A673 (cell line): ENCODE measurements at regions of chr16 and their contacts with region 1.

Region 1: DNA sequence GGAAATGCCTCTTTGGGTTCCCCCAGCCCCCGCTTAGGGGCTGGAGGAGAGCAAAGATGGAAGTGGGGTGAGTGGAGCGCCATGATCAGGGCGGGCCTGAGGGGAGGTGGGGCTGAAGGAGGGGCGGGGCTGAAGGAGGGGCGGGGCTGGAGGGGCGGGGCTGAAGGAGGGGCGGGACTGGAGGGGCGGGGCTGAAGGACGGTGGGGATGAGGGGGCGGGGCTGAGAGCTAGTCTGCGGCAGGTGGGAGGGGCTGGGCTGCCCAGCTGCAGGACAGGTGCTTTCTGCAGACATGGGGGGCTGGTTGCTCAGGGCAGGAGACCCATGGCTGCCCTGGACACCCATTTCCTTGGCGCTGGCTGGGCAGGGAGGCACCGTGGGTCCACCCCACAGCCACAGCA is 39.1 kb upstream of the PABPN1L start:
- DNase-seq: peak; percentile 26
- H3K4me3 ChIP-seq: no peak overlapping the region
- H3K27ac ChIP-seq: no peak overlapping the region
- H3K4me1 ChIP-seq: peaks cover 4% of the 10 kb centered on the region
- H3K27me3 ChIP-seq: no peaks in the 10 kb centered on the region
- CTCF ChIP-seq: no peak

Region 2: DNA sequence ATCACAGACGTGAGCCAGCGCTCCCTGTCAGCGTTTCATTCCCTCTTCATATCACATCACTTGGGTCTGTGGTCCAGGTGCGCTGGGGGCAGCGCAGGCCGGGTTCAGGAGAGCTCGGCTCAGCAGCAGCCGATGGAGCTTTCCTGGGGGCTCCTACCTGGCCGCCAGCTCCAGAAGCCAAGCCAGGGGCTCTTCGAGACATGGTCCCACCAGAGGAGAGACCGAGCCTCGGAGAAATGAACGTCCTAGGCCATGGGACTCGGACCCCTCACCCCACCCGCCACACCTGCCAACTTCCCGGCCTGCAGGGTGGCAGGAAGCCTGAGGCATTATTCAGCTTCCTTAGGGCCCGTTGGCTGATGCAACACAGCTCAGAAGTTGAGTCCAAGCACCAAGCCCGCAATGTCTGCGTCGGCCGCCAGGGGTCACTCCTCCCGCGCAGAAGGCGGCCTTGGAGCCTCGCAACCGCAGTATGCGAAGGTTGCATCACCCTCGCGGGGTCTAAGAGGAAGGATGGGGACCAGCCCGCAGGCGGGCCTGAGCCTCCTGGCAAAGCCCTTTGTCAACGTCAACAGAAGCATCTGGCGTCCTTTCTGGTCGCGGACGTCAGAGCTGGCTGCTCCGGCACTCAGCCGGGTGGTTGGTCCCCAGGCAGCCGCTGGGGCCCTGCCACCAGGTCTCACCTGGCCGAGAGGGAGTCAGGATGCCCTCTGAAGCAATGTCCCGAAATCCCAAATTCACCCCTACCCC is 1126.6 kb before region 1 on chr16:
- CTCF ChIA-PET with region 1: no interaction called
- POLR2A ChIA-PET with region 1: no interaction called
- intact Hi-C with region 1: no loop called
- DNase-seq: peak; percentile 97
- H3K4me3 ChIP-seq: peak overlapping the region; percentile 15
- H3K27ac ChIP-seq: peak overlapping the region; percentile 99
- H3K4me1 ChIP-seq: peaks cover 45% of the 10 kb centered on the region
- H3K27me3 ChIP-seq: no peaks in the 10 kb centered on the region
- CTCF ChIP-seq: peak; percentile 93

Region 3: DNA sequence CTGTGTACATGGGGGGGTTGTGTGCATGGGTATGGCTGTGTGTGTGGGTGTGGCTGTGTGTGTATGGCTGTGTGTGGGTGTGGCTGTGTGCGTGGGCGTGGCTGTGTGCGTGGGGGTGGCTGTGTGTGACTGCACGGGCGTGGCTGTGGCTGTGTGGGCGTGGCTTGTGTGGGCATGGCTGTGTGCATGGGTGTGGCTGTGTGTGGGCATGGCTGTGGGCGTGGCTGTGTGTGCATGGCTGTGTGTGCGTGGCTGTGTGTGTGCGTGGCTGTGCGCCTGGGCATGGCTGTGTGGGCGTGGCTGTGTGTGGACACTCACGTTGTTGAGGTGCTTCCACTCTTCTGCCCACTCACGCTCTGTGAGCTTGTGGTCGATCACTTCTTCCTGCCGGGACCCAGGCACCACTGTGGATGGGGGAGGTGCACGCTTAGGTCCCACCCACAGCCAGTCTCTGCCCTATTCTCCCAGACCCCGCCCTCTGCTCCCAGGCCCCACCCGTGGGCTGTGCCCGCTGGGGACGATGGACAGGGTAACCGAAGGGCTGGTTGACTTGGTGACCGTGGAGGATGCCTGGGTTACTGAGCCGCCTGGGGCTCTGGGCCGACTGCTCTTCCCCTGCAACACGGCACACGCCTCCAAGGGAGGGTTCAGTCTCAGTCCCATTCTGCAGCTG is 23.1 kb before region 1 on chr16:
- CTCF ChIA-PET with region 1: no interaction called
- POLR2A ChIA-PET with region 1: interaction called, 11 read pairs
- intact Hi-C with region 1: no loop called
- DNase-seq: peak; percentile 37
- H3K4me3 ChIP-seq: no peak overlapping the region
- H3K27ac ChIP-seq: no peak overlapping the region
- H3K4me1 ChIP-seq: no peaks in the 10 kb centered on the region
- H3K27me3 ChIP-seq: no peaks in the 10 kb centered on the region
- CTCF ChIP-seq: no peak

Region 4: DNA sequence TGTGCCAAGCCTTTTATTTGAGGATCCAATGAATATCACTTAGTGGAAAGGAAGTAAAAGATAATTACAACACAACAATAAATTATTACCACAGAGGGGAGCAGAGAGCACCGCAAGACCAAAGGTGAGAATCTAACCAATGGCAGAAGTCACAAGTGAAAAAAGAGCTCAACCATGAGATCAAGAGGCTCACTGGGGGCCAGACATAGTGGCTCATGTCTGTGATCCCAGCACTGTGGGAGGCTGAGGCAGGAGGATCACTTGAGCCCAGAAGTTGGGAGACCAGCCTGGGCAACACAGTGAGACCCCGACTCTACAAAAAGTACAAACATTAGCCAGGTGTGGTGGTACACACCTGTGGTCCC is 567.1 kb after region 1 on chr16:
- CTCF ChIA-PET with region 1: no interaction called
- POLR2A ChIA-PET with region 1: no interaction called
- intact Hi-C with region 1: no loop called
- DNase-seq: no peak
- H3K4me3 ChIP-seq: no peak overlapping the region
- H3K27ac ChIP-seq: no peak overlapping the region
- H3K4me1 ChIP-seq: peaks cover 13% of the 10 kb centered on the region
- H3K27me3 ChIP-seq: no peaks in the 10 kb centered on the region
- CTCF ChIP-seq: no peak